ENCODE measurements at regions of chr11 and their contacts with region 1.

Region 1: GRCh38 chr11:119057000-119057769 is at the start of gene HYOU1:
- DNase-seq: peak; percentile 95 to 99
- H3K4me3 ChIP-seq: peak within 1 kb of the TSS; percentile 88 to 95
- H3K27ac ChIP-seq: peak within 1 kb of the TSS; percentile 91 to 96
- H3K4me1 ChIP-seq: peaks cover 3 to 10% of the 10 kb centered on the region in 2 donors
- H3K27me3 ChIP-seq: no peaks in the 10 kb centered on the region
- CTCF ChIP-seq: peak; percentile 6 to 36 (median 14)
- total RNA-seq, gene HYOU1: 98.4 TPM

Region 2: GRCh38 chr11:118980191-118980881 is 76.8 kb before region 1 on chr11:
- intact Hi-C with region 1: no loop called
- DNase-seq: no peak
- H3K4me3 ChIP-seq: no peak overlapping the region
- H3K27ac ChIP-seq: no peak overlapping the region
- H3K4me1 ChIP-seq: no peaks in the 10 kb centered on the region
- H3K27me3 ChIP-seq: no peaks in the 10 kb centered on the region
- CTCF ChIP-seq: no peak

Region 3: GRCh38 chr11:119018074-119018938 is 38.9 kb before region 1 on chr11 and contains the starts of genes RPS25 and TRAPPC4:
- intact Hi-C with region 1: loop called (anchors 1 kb)
- DNase-seq: peak; percentile 87 to 97
- H3K4me3 ChIP-seq: peak within 1 kb of the TSS; percentile 78 to 89
- H3K27ac ChIP-seq: peak within 1 kb of the TSS; percentile 83 to 96
- H3K4me1 ChIP-seq: peaks cover 7 to 32% of the 10 kb centered on the region in 2 donors
- H3K27me3 ChIP-seq: no peaks in the 10 kb centered on the region
- CTCF ChIP-seq: peak in 1 of 3 experiments; percentile 15
- total RNA-seq, gene RPS25: 857 TPM
- total RNA-seq, gene TRAPPC4: 41.0 TPM

Region 4: GRCh38 chr11:119067371-119068222 is 10.4 kb after region 1 on chr11 and contains the start of gene VPS11:
- intact Hi-C with region 1: loop called (anchors 1 kb)
- DNase-seq: peak; percentile 89 to 99
- H3K4me3 ChIP-seq: peak within 1 kb of the TSS; percentile 82 to 97
- H3K27ac ChIP-seq: peak within 1 kb of the TSS; percentile 89 to 91
- H3K4me1 ChIP-seq: peaks cover 10 to 28% of the 10 kb centered on the region in 2 donors
- H3K27me3 ChIP-seq: no peaks in the 10 kb centered on the region
- CTCF ChIP-seq: no peak
- total RNA-seq, gene VPS11: 23.4 TPM

Region 5: DNA sequence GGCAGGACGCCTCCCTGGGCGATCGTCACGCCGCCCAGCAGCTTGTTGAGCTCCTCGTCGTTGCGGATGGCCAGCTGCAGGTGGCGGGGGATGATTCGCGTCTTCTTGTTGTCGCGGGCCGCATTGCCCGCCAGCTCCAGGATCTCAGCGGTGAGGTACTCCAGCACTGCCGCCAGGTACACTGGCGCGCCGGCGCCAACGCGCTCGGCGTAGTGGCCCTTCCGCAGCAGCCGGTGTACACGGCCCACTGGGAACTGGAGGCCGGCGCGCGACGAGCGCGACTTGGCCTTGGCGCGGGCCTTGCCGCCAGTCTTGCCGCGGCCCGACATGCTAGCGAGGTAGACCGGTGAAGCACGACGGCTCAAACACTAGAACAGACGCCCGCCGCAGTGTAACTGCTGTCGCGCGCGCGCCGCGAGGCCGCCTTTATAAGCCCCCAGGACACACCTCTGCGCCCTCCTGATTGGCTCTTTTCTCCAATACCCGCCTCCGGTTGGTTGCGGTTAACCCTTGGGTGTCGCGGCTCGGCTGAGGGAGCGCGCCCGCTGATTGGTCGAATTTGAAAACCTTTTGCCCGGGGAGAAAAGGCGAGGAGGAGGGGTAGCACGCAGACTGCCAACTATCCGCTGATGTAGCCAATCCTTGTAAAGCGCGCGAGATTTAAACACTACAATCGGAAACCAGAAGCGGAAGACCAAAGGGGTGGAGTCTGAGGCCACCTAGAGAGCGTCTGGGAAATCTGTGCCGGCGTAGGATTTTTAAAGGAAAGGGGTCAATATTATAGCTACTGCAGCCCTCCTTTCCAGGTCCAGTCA is 38.1 kb after region 1 on chr11:
- intact Hi-C with region 1: loop called (anchors 2 kb)
- DNase-seq: peak; percentile 96 to 100
- H3K4me3 ChIP-seq: peak overlapping the region; percentile 89 to 98
- H3K27ac ChIP-seq: peak overlapping the region; percentile 96 to 97
- H3K4me1 ChIP-seq: peaks cover 18 to 28% of the 10 kb centered on the region in 2 donors
- H3K27me3 ChIP-seq: no peaks in the 10 kb centered on the region
- CTCF ChIP-seq: no peak

Region 6: GRCh38 chr11:119101759-119102423 is 44.7 kb after region 1 on chr11 and contains the start of gene DPAGT1:
- intact Hi-C with region 1: loop called (anchors 2 kb)
- DNase-seq: peak; percentile 70 to 97
- H3K4me3 ChIP-seq: peak within 1 kb of the TSS; percentile 75 to 89
- H3K27ac ChIP-seq: peak within 1 kb of the TSS; percentile 92
- H3K4me1 ChIP-seq: peaks cover 20 to 25% of the 10 kb centered on the region in 2 donors
- H3K27me3 ChIP-seq: no peaks in the 10 kb centered on the region
- CTCF ChIP-seq: no peak
- total RNA-seq, gene DPAGT1: 61.9 TPM

Region 7: DNA sequence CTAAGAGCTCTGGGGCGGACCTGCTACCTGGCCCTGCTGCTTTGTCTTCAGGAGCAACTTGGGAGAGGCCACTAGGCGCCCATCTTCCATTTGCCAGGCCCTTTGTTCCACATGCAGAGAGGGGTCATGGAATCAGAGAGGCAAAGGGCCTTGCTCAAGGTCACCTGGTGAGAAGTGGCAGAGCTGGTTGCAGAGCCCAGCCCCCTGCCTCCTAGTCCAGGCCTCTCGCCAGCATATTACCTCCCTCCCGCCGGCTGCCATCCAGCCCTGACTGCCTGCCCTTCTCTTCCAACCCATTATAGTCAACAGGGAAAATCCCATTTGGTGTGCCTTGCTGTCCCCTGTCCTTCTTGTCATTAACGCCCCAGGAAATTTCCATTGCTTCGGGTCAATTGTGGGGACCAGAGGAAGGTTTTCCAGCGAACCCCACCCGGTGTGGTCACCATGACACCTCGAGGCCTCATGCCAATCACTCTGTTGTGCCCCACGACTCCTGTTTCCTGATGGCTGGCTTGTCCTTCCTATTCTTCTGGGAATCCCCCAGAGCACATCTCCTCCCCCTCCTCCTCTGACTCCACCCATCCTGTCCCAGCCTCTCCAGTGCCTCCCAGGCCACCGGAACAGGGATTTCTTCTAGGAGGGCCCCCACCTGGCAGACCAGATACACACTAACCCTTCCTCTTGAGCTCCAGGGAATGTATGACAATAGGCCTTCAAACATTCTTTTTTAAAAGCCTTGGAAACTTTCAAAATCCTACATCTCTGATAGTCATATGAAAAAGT is 594.8 kb after region 1 on chr11:
- intact Hi-C with region 1: no loop called
- DNase-seq: no peak
- H3K4me3 ChIP-seq: no peak overlapping the region
- H3K27ac ChIP-seq: no peak overlapping the region
- H3K4me1 ChIP-seq: no peaks in the 10 kb centered on the region
- H3K27me3 ChIP-seq: no peaks in the 10 kb centered on the region
- CTCF ChIP-seq: no peak